ENCODE measurements at regions of chr18 and their contacts with region 1.

Region 1: DNA sequence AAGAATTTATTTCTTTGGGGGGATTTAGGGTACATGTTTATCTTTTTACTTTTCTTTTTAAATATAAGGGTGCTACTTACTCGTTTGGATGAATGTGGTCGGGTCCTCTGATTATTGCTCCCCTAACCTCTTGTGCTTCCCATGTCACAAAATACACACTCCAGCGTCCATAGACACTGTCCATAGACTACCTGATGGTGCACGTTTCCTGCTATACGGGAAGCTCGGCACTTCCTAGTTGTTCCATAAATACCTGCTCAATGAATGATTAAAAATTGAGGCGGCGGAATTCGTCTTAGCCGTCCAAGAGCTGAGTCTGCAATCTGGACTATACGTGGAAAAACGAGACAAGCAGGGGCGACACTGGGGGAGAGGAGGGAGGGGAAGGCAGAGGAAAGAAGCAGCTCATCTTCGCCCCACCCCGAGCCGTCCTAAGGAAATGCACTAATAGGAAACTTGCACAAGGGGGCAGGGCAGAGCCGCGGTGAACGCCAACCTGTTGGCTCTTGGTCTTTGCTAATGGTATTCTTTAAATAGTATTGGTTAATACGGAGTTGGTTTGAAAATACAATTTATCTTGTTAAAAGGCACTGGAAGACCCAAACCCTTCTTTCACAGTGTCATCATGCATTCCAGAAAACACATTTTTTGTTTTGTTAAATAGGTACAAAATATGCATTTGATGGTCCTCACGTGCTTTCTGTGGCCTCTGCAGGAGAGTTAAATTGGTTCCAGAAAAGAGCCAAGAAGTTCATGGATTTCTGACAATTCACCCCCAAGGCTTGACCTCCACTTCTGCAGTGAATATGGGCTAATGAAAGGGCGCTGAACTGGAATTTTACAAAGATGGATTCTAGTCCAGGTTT is 73.0 kb upstream of the KCTD1 start:
- DNase-seq: peak in 3 of 5 donors; percentile 25 to 54 (median 33)
- ATAC-seq: peak in 3 of 4 donors; percentile 71 to 76 (median 75)
- H3K4me3 ChIP-seq: no peak overlapping the region
- H3K27ac ChIP-seq: no peak overlapping the region
- H3K4me1 ChIP-seq: peaks cover 0 to 2% (median 0%) of the 10 kb centered on the region in 12 donors
- H3K27me3 ChIP-seq: no peaks in the 10 kb centered on the region
- CTCF ChIP-seq: peak; percentile 49 to 70 (median 62)
- POLR2A ChIP-seq: no peak

Region 2: GRCh38 chr18:26480897-26481895 is 140.2 kb before region 1 on chr18:
- intact Hi-C with region 1: no loop called
- DNase-seq: no peak
- ATAC-seq: no peak
- H3K4me3 ChIP-seq: no peak overlapping the region
- H3K27ac ChIP-seq: no peak overlapping the region
- H3K4me1 ChIP-seq: no peaks in the 10 kb centered on the region
- H3K27me3 ChIP-seq: no peaks in the 10 kb centered on the region
- CTCF ChIP-seq: no peak
- POLR2A ChIP-seq: no peak

Region 3: GRCh38 chr18:26963292-26963691 is 341.9 kb after region 1 on chr18:
- intact Hi-C with region 1: loop called in 1 of 10 experiments (anchors 10 kb)
- DNase-seq: no peak
- ATAC-seq: peak in 3 of 4 donors; percentile 52 to 56 (median 54)
- H3K4me3 ChIP-seq: no peak overlapping the region
- H3K27ac ChIP-seq: no peak overlapping the region
- H3K4me1 ChIP-seq: peaks cover 0 to 9% (median 0%) of the 10 kb centered on the region in 12 donors
- H3K27me3 ChIP-seq: no peaks in the 10 kb centered on the region
- CTCF ChIP-seq: peak; percentile 9 to 51 (median 35)
- POLR2A ChIP-seq: no peak

Measured in heart left ventricle (tissue), 16 donors.